WTC11 (cell line): ENCODE measurements at regions of chr6 and their contacts with region 1.

Region 1: GRCh38 chr6:16761471-16762267 is 409 bp upstream of the ATXN1 start:
- DNase-seq: peak; percentile 87
- ATAC-seq: peak; percentile 56
- H3K4me3 Mint-ChIP-seq: peak overlapping the region; percentile 96
- H3K27ac Mint-ChIP-seq: no peak overlapping the region
- H3K4me1 Mint-ChIP-seq: peaks cover 30% of the 10 kb centered on the region
- H3K27me3 Mint-ChIP-seq: peaks cover 26% of the 10 kb centered on the region
- CTCF ChIP-seq: no peak

Region 2: GRCh38 chr6:16514249-16514648 is 247.4 kb before region 1 on chr6:
- CTCF ChIA-PET with region 1: interaction called, 26 read pairs
- POLR2A ChIA-PET with region 1: interaction called, 3 read pairs
- DNase-seq: no peak
- ATAC-seq: peak; percentile 64
- H3K4me3 Mint-ChIP-seq: no peak overlapping the region
- H3K27ac Mint-ChIP-seq: peak overlapping the region; percentile 42
- H3K4me1 Mint-ChIP-seq: peaks cover 39% of the 10 kb centered on the region
- H3K27me3 Mint-ChIP-seq: no peaks in the 10 kb centered on the region
- CTCF ChIP-seq: no peak

Region 3: DNA sequence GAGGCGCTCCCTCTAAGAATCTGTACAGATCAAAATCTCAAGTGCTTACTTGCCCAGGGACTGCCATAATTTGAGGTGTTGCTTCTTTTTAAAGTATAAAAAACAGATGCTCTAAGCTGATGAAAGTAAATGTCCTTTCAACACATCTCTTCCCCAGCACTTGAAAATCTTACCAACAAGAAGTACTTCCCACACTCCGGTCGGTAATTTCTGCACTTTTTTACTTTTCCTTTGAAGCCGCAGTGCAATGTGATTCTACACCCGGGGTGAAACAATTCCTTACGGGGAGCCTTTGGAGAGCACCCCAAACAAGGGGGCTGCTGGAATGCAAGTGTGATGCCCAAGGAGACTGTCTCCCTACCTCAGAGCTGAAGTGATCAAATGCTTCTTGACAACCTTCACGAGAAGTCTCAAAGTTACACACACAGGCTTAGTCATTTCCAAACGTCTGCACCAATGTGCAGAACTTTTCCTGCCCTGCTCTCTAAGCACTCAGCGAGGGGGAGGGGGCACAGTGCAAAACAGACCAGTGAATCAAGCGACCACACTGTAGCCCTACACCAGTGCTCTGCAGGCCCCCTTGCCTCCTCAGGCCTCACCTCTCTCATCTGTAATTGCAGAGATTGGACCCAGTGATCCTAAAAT is 57.1 kb before region 1 on chr6:
- CTCF ChIA-PET with region 1: no interaction called
- POLR2A ChIA-PET with region 1: no interaction called
- DNase-seq: no peak
- ATAC-seq: no peak
- H3K4me3 Mint-ChIP-seq: no peak overlapping the region
- H3K27ac Mint-ChIP-seq: no peak overlapping the region
- H3K4me1 Mint-ChIP-seq: peaks cover 29% of the 10 kb centered on the region
- H3K27me3 Mint-ChIP-seq: no peaks in the 10 kb centered on the region
- CTCF ChIP-seq: no peak

Region 4: DNA sequence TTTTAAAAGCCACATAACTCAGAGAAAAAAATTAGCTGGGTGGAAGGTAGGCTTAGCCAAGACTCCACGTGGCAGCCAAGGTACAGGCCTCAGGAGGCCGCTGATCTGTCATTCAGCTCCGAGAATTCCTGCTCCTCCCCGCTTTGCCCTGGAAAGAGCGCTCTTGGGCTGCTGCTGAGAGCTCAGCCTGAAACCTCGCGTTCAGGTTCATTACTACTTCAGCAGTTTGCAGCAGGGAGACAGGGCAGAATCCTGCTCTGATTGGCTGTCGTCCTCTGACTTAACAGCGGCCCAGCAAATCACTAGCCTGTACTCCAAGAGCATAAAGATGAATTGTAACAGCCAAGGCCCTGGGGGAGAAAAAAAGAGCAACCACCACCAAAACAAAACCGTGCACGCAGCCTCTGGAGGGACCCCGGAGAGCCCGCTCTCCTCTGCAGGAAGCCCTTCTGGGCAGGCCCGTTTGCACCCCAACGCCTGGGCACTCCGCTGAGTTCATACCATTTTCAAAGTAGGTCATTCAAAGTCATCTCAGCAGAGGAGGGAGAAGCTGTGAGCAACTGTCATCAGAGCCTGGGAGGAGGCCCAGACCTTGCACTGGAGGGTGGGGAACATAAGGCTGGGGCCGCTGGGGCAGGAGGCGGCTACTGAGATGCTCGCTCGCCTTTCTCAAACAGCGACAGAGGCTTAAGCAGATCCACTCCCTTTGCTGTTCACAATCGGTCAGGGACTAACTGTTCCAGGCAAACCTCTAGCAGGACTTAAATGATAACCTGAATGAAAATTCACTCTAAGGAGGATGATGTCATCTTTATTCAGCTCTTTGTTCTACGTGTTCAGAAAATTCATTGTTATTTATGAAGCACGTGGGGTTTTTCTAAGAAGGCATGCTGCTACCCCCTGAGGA is 41.9 kb after region 1 on chr6:
- CTCF ChIA-PET with region 1: interaction called, 16 read pairs
- POLR2A ChIA-PET with region 1: no interaction called
- DNase-seq: peak; percentile 73
- ATAC-seq: peak; percentile 96
- H3K4me3 Mint-ChIP-seq: peak overlapping the region; percentile 67
- H3K27ac Mint-ChIP-seq: peak overlapping the region; percentile 62
- H3K4me1 Mint-ChIP-seq: peaks cover 35% of the 10 kb centered on the region
- H3K27me3 Mint-ChIP-seq: no peaks in the 10 kb centered on the region
- CTCF ChIP-seq: no peak